ENCODE measurements at regions of chr12 and their contacts with region 1.

Region 1: DNA sequence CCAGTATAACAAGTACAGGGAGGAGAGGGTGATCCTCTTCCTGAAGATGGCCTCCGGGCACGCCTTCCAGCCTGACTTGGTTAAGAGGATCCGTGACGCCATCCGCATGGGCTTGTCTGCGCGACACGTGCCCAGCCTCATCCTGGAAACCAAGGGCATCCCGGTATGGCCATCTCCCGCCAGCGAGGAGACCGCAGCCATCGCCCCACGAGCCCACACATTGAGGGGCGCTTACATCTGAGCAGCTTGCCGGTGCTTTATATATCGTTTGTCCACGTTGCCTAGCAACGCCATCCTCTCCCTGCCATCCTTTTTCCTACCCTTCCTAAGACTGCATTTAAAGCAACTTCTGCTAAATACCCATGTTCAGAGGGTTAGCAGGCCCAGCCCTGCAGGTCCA is 71.5 kb downstream of the AACS start:
- DNase-seq: no peak
- H3K4me3 ChIP-seq: no peak overlapping the region
- H3K27ac ChIP-seq: no peak overlapping the region
- H3K4me1 ChIP-seq: no peaks in the 10 kb centered on the region
- H3K27me3 ChIP-seq: no peaks in the 10 kb centered on the region
- CTCF ChIP-seq: no peak
- EP300 ChIP-seq: no peak
- POLR2A ChIP-seq: no peak

Region 2: GRCh38 chr12:125079648-125080645 is 56.8 kb before region 1 on chr12:
- in situ Hi-C with region 1: no loop called
- intact Hi-C with region 1: no loop called
- DNase-seq: no peak
- H3K4me3 ChIP-seq: no peak overlapping the region
- H3K27ac ChIP-seq: no peak overlapping the region
- H3K4me1 ChIP-seq: no peaks in the 10 kb centered on the region
- H3K27me3 ChIP-seq: no peaks in the 10 kb centered on the region
- CTCF ChIP-seq: no peak
- EP300 ChIP-seq: no peak
- POLR2A ChIP-seq: no peak

Region 3: DNA sequence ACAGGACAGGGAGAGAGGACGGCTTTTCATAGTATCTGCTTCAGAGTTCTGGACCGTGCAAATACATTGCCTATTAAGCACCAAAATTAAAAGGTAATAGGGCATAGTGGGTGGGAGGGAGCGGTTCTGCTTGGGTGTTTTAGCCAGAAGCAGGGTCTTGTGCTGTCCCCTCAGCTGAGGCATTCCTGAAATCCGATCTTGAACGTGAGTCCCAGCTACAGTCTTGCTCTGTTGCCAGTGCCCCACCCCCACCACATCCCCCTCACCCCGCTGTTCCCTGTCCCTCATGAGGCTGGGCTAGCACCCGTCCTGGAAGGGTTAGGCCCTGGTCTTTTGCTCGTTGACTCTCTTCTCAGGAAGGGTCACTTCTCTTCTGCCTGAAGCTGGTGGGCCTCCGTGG is 22.9 kb before region 1 on chr12:
- in situ Hi-C with region 1: no loop called
- intact Hi-C with region 1: loop called (anchors 1 kb)
- DNase-seq: no peak
- H3K4me3 ChIP-seq: no peak overlapping the region
- H3K27ac ChIP-seq: no peak overlapping the region
- H3K4me1 ChIP-seq: peaks cover 0 to 21% (median 10%) of the 10 kb centered on the region in 4 donors
- H3K27me3 ChIP-seq: no peaks in the 10 kb centered on the region
- CTCF ChIP-seq: no peak
- EP300 ChIP-seq: no peak
- POLR2A ChIP-seq: no peak